ENCODE measurements at regions of chr17 and their contacts with region 1.

Region 1: DNA sequence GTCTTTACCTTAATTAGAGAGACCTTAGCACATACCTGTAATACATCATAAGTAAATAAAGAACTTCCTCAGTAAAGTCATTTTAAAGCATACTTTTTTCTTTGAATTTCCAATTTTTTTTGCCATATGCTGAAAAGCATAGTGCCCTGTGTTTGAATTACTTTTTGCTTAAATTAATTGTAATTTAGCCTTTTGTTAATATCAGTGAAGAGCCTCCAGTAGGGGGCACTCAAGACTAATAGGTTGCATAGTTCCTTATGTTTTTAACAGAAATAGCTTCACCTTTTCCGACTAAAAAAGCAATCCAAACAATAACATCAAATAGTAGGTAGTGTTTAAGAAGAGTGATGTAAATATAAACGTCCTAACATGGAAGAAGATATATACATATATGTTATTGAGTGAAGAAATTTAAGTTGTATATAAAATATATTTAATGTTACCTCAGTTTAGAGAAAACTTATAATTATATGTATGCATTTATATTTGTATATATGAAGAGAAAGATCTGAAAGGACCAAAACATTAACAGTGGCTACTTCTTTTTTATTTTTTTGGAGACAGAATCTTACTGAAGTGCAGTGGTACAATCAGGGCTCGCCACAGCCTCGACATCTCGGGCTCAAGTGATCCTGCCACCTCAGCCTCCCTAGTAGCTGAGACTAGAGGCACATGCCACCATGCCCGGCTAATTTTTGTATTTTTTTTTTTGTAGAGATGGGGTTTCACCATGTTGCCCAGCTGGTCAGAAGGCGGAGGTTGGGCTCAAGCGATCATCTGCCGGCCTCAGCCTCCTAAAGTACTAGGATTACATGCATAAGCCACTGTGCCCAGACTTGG is 18.8 kb downstream of the RAD51C start:
- DNase-seq: peak; percentile 85
- ATAC-seq: peak; percentile 58
- H3K4me3 ChIP-seq: no peak overlapping the region
- H3K27ac ChIP-seq: no peak overlapping the region
- H3K4me1 ChIP-seq: no peaks in the 10 kb centered on the region
- H3K27me3 ChIP-seq: no peaks in the 10 kb centered on the region
- CTCF ChIP-seq: peak; percentile 96

Region 2: DNA sequence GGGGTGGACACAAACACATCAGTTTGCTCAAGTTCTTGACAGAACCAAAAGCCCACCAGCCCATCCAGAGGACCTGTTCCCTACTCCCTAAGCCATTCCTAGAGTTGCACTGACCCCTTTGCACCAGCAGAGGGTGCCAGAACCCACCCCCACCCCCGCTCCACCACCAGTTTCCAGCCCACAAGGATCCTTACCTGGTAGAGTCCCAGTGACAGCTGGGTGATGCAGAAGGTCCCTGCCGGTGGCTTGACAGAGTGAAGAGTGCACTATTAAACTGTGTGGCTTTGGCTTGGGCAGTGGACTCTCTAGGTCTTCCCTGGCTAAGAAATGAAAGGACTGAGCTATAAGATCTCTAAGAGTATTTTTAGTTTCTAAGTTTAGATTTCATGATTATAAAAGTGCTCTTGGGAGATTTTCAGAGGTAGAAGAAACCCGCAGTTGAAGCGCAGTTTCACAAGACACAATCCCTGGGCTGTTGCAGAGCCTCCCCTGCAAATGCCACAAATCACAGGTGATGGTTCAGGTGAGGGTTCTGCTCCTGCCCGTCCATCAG is 123.4 kb before region 1 on chr17:
- CTCF ChIA-PET with region 1: interaction called, 3 read pairs
- POLR2A ChIA-PET with region 1: no interaction called
- intact Hi-C with region 1: loop called (anchors 2 kb)
- DNase-seq: peak; percentile 84
- ATAC-seq: peak; percentile 97
- H3K4me3 ChIP-seq: no peak overlapping the region
- H3K27ac ChIP-seq: no peak overlapping the region
- H3K4me1 ChIP-seq: no peaks in the 10 kb centered on the region
- H3K27me3 ChIP-seq: 0 out of 2 replicates have a peak, but pooled peaks cover 4% of the 10 kb centered on the region
- CTCF ChIP-seq: peak; percentile 98

Region 3: DNA sequence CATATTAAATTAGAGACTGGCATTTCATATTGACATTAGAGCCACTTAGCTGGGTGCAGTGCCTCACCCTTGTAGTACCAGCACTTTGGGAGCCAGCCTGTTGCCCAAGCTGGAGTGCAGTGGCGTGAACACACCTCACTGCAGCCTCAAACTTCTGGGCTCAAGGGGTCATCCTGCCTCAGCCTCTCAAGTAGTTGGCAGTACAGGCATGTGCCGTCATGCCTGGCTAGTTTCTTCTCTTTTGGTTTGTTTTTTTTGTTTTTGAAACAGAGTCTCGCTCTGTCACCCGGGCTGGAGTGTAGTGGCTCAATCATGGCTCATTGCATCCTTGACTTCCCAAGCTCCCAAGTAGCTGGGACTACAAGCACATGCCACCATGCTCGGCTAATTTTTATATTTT is 53.2 kb after region 1 on chr17:
- CTCF ChIA-PET with region 1: no interaction called
- POLR2A ChIA-PET with region 1: no interaction called
- intact Hi-C with region 1: no loop called
- DNase-seq: no peak
- ATAC-seq: no peak
- H3K4me3 ChIP-seq: no peak overlapping the region
- H3K27ac ChIP-seq: no peak overlapping the region
- H3K4me1 ChIP-seq: no peaks in the 10 kb centered on the region
- H3K27me3 ChIP-seq: peaks cover 66% of the 10 kb centered on the region
- CTCF ChIP-seq: no peak

Region 4: GRCh38 chr17:58960068-58960467 is 248.9 kb after region 1 on chr17:
- CTCF ChIA-PET with region 1: interaction called, 3 read pairs
- POLR2A ChIA-PET with region 1: no interaction called
- intact Hi-C with region 1: loop called (anchors 1 kb)
- DNase-seq: peak; percentile 87
- ATAC-seq: peak; percentile 65
- H3K4me3 ChIP-seq: no peak overlapping the region
- H3K27ac ChIP-seq: no peak overlapping the region
- H3K4me1 ChIP-seq: peaks cover 19% of the 10 kb centered on the region
- H3K27me3 ChIP-seq: no peaks in the 10 kb centered on the region
- CTCF ChIP-seq: peak; percentile 68

Measured in PC-3 (cell line).